Spleen (tissue), 13 donors: ENCODE measurements at regions of chr1 and their contacts with region 1.

Region 1: DNA sequence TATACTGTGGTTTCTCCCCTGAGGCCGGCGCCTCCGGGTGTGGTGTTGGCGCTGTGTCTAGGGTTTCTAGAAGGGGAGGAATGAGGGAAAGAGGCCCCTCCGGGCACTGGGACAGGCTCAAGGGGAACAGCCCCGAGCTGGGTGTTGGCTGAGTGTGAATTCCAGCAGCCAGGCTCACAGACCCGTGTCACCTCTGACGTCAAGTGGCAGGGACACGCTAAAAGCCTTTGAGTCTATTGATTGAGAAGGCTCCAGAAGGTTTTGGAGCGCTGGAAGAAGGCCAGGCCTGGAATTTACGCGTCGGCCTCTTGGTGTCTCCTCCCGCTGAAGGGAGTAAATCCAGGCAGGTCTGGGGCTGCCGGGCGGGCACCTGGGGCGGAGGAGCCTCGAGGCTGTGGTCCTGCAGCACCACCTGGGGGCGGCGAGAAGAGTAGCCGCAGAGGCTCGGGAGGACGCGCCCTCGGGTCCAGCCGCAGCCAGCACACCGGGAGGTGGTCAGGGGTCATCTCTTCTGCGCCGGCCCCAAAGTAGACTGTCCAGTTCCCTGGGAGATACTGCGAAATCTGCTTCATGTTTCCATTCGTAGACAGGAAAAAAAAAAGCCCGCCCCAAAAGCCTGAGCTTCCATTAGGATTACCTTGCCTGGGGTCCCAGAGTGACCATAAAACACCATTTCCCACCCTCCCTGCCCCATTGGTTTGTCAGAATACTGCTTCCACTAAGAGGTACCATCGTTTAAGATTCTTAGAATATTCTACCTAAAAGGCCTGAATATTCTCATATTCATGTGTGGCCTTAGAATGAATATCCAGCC is 61.7 kb downstream of the TLR5 start:
- DNase-seq: peak; percentile 94
- H3K4me3 ChIP-seq: peak overlapping the region; percentile 8 to 64 (median 32)
- H3K27ac ChIP-seq: peak overlapping the region in 3 of 8 donors; percentile 40 to 55 (median 51)
- H3K4me1 ChIP-seq: peaks cover 0 to 13% (median 6%) of the 10 kb centered on the region in 6 donors
- H3K27me3 ChIP-seq: no peaks in the 10 kb centered on the region
- CTCF ChIP-seq: peak; percentile 47 to 94 (median 89)
- POLR2A ChIP-seq: no peak

Region 2: GRCh38 chr1:222792744-222793143 is 288.6 kb before region 1 on chr1:
- intact Hi-C with region 1: loop called (anchors 2 kb)
- DNase-seq: no peak
- H3K4me3 ChIP-seq: no peak overlapping the region
- H3K27ac ChIP-seq: no peak overlapping the region
- H3K4me1 ChIP-seq: peaks cover 0 to 17% (median 0%) of the 10 kb centered on the region in 6 donors
- H3K27me3 ChIP-seq: no peaks in the 10 kb centered on the region
- CTCF ChIP-seq: peak in 9 of 11 experiments; percentile 16 to 58 (median 48)
- POLR2A ChIP-seq: no peak

Region 3: DNA sequence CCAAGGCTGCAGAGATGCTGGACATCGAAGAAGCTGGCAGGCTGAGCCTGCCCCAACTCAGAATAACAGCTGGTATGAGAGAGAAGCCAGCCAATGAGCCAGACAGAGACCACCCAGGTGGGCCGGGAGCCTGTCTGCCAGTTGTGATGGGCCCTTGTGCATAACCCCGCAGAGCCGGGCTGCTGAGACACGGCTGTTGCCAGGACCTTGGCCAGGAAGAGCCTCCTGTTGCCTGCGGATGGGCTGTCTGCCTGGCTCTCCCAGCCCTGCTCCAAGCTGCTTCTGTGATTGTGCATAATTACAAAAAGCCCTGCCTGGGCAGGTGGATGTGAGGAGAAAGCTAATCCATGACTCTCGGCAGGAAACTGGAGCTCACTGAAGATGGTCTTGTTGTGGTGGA is 457.6 kb after region 1 on chr1:
- intact Hi-C with region 1: no loop called
- DNase-seq: no peak
- H3K4me3 ChIP-seq: no peak overlapping the region
- H3K27ac ChIP-seq: no peak overlapping the region
- H3K4me1 ChIP-seq: no peaks in the 10 kb centered on the region
- H3K27me3 ChIP-seq: peaks cover 0 to 15% (median 0%) of the 10 kb centered on the region in 7 donors
- CTCF ChIP-seq: no peak
- POLR2A ChIP-seq: no peak